HEK293T (cell line): ENCODE measurements at regions of chr1 and their contacts with region 1.

Region 1: DNA sequence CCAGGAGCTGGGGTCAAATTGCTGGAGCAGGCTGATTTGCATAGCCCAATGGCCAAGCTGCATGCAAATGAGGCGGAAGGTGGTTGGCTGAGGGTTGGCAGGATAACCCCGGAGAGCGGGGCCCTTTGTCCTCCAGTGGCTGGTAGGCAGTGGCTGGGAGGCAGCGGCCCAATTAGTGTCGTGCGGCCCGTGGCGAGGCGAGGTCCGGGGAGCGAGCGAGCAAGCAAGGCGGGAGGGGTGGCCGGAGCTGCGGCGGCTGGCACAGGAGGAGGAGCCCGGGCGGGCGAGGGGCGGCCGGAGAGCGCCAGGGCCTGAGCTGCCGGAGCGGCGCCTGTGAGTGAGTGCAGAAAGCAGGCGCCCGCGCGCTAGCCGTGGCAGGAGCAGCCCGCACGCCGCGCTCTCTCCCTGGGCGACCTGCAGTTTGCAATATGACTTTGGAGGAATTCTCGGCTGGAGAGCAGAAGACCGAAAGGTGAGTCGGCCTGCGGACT is at the start of gene GADD45A:
- DNase-seq: peak; percentile 100

Region 2: GRCh38 chr1:67540733-67541125 is 144.4 kb before region 1 on chr1:
- CTCF ChIA-PET with region 1: interaction called, 5 read pairs
- POLR2A ChIA-PET with region 1: interaction called, 13 read pairs
- DNase-seq: no peak

Region 3: GRCh38 chr1:67570473-67571143 is 114.5 kb before region 1 on chr1:
- CTCF ChIA-PET with region 1: no interaction called
- POLR2A ChIA-PET with region 1: interaction called, 27 read pairs
- DNase-seq: no peak

Region 4: GRCh38 chr1:67668660-67669059 is 16.5 kb before region 1 on chr1:
- CTCF ChIA-PET with region 1: interaction called, 7 read pairs
- POLR2A ChIA-PET with region 1: interaction called, 22 read pairs
- DNase-seq: no peak

Region 5: GRCh38 chr1:67700692-67701410 is 15.7 kb after region 1 on chr1:
- CTCF ChIA-PET with region 1: interaction called, 8 read pairs
- POLR2A ChIA-PET with region 1: interaction called, 42 read pairs
- DNase-seq: peak; percentile 91

Region 6: DNA sequence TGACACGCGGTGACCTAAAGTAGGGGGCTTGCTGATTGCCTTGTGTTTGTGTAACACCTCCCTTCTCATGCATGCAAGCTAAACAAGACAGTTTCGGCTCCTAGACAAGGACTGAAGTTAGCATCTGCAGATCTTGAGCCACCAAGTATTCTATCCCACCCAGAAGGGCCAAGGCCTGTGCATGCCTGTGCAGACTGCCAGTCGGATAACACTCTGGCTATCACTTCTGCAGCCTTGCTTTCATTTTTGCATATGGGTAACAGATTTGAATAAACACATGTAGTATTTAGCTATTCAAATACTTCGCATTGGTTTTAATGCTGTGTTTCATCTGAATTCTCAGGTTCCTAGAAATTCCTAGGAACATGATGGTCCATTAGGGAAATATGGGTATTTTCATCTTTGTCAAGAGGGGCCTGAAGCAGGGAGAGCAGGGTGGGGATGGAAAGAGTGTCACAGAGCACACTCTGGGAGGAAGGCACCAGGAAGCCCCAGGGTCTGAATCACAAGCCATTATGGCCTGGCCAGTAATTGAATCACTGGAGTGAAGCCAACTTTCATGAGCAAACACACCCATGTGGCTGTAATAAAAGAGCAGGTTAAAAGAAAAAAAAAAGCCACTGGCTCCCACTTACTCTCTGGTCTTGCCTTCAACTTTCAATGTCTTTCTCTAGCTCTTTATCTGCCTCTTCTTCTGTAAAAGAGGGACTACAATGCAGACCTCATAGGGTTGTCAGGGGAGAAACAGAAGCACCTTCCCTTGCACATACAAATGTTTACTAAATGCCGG is 28.1 kb after region 1 on chr1:
- CTCF ChIA-PET with region 1: no interaction called
- POLR2A ChIA-PET with region 1: interaction called, 15 read pairs
- DNase-seq: peak; percentile 73

Region 7: DNA sequence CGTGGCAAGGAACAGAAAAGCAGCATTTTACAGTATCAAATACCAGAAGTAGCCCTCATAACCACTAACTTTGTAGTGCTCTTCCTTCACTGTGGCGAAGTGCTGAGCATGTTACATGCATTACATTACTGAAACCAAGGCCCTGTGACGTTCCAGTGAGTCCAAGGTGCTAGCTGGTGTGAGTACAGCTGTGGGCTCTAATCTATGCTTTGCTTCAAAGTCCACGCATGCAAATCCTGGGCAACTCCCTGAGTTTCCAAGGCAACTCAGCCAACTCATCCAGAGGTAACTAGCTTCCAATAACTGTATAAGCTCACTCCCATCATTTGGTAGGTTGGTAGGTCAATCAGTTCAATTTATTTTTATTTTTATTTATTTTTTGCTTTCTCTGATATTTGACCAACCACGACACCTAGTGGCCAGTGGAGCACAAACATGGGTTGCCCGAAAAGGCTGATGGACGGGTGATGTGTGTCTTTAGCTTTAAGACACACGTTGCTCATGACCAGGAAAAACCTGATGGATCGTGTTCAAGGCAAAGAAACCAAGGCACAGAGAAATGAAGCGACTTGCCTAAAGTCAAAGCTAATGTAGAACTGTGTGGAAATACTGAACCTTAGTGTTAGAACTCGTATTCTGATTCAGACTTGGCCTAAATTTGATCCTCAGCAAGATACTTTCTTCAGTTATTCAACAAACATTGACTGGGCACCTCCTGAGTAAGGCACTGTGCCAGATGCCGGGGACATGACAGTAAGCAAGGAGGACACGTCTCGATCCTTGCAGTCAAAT is 75.1 kb after region 1 on chr1:
- CTCF ChIA-PET with region 1: interaction called, 6 read pairs
- POLR2A ChIA-PET with region 1: interaction called, 23 read pairs
- DNase-seq: peak; percentile 80